ENCODE measurements at regions of chr4 and their contacts with region 1.

Region 1: GRCh38 chr4:87171944-87172343 is 48.5 kb downstream of the KLHL8 start:
- H3K4me3 Mint-ChIP-seq: no peak overlapping the region
- H3K27ac Mint-ChIP-seq: no peak overlapping the region
- H3K4me1 Mint-ChIP-seq: no peaks in the 10 kb centered on the region
- H3K27me3 Mint-ChIP-seq: no peaks in the 10 kb centered on the region

Region 2: DNA sequence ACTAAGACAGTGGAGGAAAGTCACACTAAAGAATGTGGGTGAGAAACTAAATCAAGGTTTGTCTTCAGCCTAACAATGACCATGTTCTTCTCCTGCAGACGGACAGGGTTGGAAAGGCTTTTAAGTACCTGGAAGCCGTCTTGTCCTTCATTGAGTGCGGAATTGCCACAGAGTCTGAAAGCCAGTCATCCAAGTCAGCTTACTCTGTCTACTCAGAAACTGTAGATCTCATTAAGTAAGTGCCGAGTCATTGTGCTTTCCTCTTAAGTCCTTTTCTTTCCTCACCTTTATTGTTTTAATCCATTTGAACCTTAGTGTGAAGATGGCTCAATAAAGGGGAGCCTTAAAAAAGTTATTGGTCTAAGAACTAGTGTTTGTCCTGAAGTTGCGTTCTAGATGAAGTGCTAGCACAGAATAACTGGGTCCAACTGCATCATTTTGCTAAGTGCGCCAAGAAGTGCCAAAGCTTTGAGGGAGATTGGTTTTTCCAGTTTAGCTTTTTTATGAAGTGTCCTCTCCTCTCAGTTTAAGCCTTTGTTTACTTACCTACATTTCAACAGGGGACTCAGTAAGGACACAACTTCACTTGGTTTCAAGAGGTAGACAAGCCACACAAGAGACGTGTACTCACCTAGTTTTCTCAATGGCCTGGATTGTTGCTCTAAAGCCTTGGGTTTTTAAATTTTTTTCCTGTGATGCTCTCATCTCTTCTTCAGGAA is 40.8 kb before region 1 on chr4:
- intact Hi-C with region 1: no loop called
- H3K4me3 Mint-ChIP-seq: no peak overlapping the region
- H3K27ac Mint-ChIP-seq: no peak overlapping the region
- H3K4me1 Mint-ChIP-seq: no peaks in the 10 kb centered on the region
- H3K27me3 Mint-ChIP-seq: no peaks in the 10 kb centered on the region

Region 3: GRCh38 chr4:87227751-87228151 is 55.8 kb after region 1 on chr4:
- intact Hi-C with region 1: loop called (anchors 5 kb)
- H3K4me3 Mint-ChIP-seq: no peak overlapping the region
- H3K27ac Mint-ChIP-seq: no peak overlapping the region
- H3K4me1 Mint-ChIP-seq: peaks cover 6% of the 10 kb centered on the region
- H3K27me3 Mint-ChIP-seq: peaks cover 4% of the 10 kb centered on the region

Region 4: DNA sequence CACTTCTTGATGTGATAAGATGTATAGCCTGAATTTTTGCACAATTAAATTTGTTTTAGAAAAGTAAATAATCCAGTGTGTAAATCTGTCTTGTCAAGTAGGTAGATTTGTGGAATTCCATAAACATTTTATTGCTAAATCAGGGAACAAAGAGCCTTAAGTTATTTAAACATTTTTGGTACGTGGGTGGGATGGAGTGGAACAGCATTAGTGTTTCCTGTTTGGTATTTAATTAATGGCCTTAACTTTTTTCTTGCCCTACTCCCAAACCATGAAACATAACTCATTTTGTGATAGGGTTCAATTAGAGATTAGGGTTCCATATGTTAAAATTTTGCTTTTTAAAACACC is 255.5 kb after region 1 on chr4:
- intact Hi-C with region 1: no loop called
- H3K4me3 Mint-ChIP-seq: no peak overlapping the region
- H3K27ac Mint-ChIP-seq: no peak overlapping the region
- H3K4me1 Mint-ChIP-seq: peaks cover 32% of the 10 kb centered on the region
- H3K27me3 Mint-ChIP-seq: no peaks in the 10 kb centered on the region